Activated naive CD4-positive, alpha-beta T cell treated with anti-CD3 and anti-CD28 coated beads for 36 hours (primary cell): ENCODE measurements at regions of chr21 and their contacts with region 1.

Region 1: GRCh38 chr21:33608559-33608958 is 20.1 kb upstream of the DONSON start:
- DNase-seq: no peak
- H3K4me3 Mint-ChIP-seq: no peak overlapping the region
- H3K27ac Mint-ChIP-seq: peak overlapping the region; percentile 1
- H3K4me1 Mint-ChIP-seq: no peaks in the 10 kb centered on the region
- H3K27me3 Mint-ChIP-seq: no peaks in the 10 kb centered on the region

Region 2: DNA sequence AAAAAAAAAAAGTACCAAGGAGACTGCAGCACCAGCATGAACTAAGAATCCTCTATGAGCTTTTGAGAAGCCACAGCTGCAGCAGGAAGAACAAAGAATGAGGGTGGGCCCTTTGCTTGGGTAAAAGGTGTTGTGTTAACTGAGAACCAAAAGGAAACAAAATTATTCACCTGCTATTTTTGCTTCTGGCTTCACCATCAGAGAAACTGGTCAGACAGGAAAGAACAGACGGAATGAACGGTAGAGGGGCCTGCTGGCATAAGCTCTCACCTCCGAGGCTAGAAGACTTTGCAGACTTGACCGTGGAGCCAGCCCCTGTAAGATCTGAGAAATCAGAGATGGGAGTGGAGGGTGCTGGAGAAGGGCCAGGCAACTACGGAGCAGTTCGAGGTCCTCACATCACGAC is 314.7 kb before region 1 on chr21:
- CTCF ChIA-PET with region 1: no interaction called
- intact Hi-C with region 1: loop called (anchors 5 kb)
- DNase-seq: peak; percentile 39
- H3K4me3 Mint-ChIP-seq: no peak overlapping the region
- H3K27ac Mint-ChIP-seq: peak overlapping the region; percentile 61
- H3K4me1 Mint-ChIP-seq: peaks cover 40% of the 10 kb centered on the region
- H3K27me3 Mint-ChIP-seq: no peaks in the 10 kb centered on the region

Region 3: DNA sequence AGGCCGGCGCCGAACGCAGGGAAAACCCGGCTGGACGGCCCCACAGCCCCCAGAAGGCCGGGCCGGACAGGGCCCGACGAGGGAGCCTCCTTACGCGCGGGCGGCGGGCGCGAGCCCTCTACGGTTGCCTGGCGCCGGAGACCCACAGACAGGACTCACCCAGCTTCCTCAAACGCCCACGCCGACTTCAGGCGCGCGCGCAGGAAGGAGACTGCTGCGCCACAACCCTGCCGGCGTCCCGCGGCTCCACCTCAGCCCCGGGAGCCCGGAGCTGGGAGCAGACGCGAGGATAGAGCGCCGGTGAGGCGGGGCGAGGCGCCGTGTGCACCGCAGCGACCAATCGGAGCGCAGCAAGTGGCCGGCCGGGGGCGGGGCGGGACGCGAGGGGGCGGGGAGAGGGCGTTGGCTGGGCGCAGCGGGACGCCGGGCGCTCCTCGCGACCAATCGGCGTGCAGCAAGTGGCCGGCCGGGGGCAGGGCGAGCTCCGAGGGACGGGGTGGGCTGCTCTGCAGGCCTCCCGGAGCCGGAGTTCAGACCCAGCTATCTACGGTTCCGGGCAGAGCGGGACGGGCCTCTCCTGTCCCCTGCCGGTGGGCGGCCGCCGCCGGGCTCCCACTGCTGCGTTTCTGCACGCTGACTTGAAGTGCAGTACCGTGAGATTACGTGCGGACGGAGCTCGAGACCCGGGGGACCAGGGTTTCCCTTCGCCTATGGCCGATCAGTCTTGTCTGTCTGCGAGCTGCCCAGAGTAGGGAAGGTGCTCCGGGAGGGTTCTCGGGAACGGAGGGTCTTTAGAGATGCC is 128.7 kb before region 1 on chr21 and contains the start of gene TMEM50B:
- CTCF ChIA-PET with region 1: interaction called, 10 read pairs
- intact Hi-C with region 1: no loop called
- DNase-seq: peak; percentile 96
- H3K4me3 Mint-ChIP-seq: peak within 1 kb of the TSS; percentile 89
- H3K27ac Mint-ChIP-seq: peak within 1 kb of the TSS; percentile 68
- H3K4me1 Mint-ChIP-seq: peaks cover 15% of the 10 kb centered on the region
- H3K27me3 Mint-ChIP-seq: no peaks in the 10 kb centered on the region
- total RNA-seq, gene TMEM50B: 17.8 to 18.2 TPM

Region 4: DNA sequence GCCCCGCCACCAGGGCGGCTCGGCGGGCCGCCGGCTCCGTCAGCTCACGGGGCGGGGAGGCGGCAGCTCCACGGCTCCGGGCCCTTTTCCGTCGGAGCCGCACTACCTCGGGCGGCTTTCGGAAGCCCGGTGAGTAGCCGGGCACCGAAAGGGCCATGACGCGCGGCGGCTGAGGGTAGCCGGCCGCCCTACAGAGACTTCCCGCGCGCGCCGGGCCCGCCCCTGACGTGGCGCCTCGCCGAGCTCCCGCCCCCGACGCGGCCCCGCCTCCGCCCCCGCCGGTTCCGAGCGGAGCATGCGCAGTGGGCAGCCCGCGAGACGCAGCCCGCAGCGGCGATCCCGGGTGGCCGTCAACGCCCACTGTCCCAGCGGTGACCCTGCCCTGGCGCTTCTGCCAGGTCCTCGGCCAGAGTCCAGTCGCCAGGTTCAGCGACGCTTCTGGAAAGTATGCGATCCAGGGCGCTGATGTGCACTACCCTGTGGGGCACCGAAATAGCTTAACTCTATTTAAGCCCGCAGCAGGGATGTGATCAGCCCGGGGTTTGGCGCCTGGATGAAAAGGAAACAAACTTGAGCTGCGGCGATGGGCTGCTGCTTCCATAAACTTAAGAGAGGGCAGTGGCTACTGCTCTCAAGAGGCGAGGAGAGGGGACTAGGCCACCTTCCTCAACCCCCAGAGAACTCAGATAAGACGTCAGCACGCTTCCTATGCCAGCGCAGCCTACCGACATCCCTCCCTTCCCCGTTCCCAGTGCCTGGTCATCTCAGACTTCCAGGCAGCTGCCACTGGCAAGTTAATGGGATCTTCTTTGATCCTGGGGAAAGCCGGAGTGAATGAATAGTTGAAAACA is 19.8 kb before region 1 on chr21 and contains the start of gene DONSON:
- CTCF ChIA-PET with region 1: interaction called, 26 read pairs
- intact Hi-C with region 1: no loop called
- DNase-seq: peak; percentile 82
- H3K4me3 Mint-ChIP-seq: peak within 1 kb of the TSS; percentile 91
- H3K27ac Mint-ChIP-seq: peak within 1 kb of the TSS; percentile 77
- H3K4me1 Mint-ChIP-seq: peaks cover 15% of the 10 kb centered on the region
- H3K27me3 Mint-ChIP-seq: no peaks in the 10 kb centered on the region
- total RNA-seq, gene DONSON: 35.6 to 42.4 TPM

Region 5: GRCh38 chr21:33780631-33781030 is 172.1 kb after region 1 on chr21:
- CTCF ChIA-PET with region 1: no interaction called
- intact Hi-C with region 1: no loop called
- DNase-seq: no peak
- H3K4me3 Mint-ChIP-seq: no peak overlapping the region
- H3K27ac Mint-ChIP-seq: no peak overlapping the region
- H3K4me1 Mint-ChIP-seq: no peaks in the 10 kb centered on the region
- H3K27me3 Mint-ChIP-seq: no peaks in the 10 kb centered on the region

Region 6: DNA sequence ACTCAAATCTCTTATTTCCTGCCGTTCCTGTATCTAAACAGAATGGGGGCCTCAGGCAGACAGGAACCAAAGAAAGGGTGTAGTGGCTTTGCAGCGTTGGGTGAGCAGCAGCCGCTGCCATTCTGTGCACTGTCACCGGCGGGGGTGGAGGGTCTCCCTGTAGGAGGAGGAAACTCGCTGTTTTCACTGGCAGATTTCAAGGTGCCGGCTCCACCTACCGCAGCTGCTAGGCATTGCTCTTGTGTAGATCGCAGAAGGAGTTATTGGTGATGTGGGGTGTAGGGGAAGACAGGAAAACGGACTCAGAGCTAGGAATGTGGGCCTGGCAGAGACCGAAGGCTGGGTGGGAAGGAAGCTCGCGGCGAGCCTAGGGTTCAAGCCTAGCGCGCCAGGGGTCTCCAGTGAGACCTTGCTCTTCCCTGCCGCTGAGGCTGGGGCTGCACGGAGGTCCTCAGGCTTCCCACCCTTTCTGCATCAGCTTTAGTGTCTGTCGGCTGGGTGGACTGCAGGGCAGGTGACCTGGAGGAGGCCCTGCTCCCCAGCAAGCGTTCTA is 286.3 kb after region 1 on chr21:
- CTCF ChIA-PET with region 1: interaction called, 5 read pairs
- intact Hi-C with region 1: loop called (anchors 1 kb)
- DNase-seq: peak; percentile 80
- H3K4me3 Mint-ChIP-seq: peak overlapping the region; percentile 57
- H3K27ac Mint-ChIP-seq: no peak overlapping the region
- H3K4me1 Mint-ChIP-seq: peaks cover 11% of the 10 kb centered on the region
- H3K27me3 Mint-ChIP-seq: no peaks in the 10 kb centered on the region

Region 7: DNA sequence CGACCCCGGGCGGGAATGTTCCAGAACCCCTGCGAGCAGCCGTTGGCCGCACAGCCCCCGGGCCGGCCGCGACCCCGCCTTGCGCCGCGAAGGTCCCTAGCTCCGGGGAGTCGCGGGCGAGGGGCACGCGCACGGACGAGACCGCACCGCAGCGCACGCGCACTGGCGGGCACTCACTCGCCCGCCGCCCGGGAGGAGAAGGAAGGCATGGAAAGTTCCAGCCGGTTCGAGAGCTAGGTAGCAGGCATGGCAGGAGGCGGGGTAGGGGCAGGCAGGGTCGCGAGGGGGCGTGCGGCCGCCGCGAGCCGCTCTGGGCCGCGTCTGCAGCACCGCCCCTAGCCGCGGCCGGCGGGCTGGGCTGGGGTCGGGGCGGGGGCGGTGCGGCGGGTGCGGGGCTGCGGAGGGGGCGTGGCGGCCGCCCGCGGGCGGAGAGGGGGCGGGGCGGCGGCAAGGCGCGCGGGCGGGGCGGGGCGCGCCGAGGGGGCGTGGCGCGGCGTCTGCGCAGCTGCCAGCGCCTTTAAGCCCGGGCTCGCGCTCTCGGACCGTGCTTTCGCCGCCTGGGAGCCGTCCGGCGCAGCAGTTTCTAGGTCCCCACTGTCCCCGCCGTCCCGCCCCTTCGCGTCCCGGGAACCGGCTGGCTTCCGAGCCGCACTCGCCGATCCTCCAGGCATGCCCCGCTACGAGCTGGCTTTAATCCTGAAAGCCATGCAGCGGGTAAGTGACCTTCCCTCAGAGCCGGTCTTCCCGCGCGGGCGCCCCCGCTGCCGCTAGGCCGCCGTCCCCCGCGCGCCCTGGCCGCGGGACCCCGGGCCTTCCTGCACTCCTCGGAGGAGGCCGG is 464.7 kb after region 1 on chr21 and contains the starts of genes MRPS6 and SLC5A3:
- CTCF ChIA-PET with region 1: no interaction called
- intact Hi-C with region 1: no loop called
- DNase-seq: peak; percentile 69
- H3K4me3 Mint-ChIP-seq: peak within 1 kb of the TSS; percentile 88
- H3K27ac Mint-ChIP-seq: peak within 1 kb of the TSS; percentile 86
- H3K4me1 Mint-ChIP-seq: peaks cover 37% of the 10 kb centered on the region
- H3K27me3 Mint-ChIP-seq: no peaks in the 10 kb centered on the region
- total RNA-seq, gene MRPS6: 78.9 to 80.0 TPM
- total RNA-seq, gene SLC5A3: 21.2 to 21.7 TPM